Calu3 (cell line): ENCODE measurements at regions of chr1 and their contacts with region 1.

Region 1: DNA sequence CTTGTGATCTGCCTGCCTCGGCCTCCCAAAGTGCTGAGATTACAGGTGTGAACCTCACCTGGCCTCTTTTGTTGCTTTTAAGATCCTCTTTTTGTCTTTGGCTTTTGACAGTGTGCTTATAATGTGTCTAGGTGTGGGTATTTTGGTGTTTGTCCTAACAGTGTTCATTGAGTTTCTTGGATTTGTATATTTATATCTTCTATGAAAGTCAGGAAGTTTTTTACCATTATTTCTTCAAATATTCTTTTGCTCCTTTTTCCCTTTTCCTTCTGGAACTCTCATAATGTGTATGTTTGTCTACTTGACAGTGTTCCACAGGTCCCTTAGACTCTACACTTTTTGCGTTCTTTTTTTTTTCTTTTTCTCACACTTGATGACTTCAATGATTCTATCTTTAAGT is 59.1 kb downstream of the URB2 start:
- DNase-seq: no peak
- H3K4me3 Mint-ChIP-seq: no peak overlapping the region
- H3K27ac Mint-ChIP-seq: no peak overlapping the region
- H3K4me1 Mint-ChIP-seq: no peaks in the 10 kb centered on the region
- H3K27me3 Mint-ChIP-seq: no peaks in the 10 kb centered on the region
- CTCF ChIP-seq: no peak

Region 2: DNA sequence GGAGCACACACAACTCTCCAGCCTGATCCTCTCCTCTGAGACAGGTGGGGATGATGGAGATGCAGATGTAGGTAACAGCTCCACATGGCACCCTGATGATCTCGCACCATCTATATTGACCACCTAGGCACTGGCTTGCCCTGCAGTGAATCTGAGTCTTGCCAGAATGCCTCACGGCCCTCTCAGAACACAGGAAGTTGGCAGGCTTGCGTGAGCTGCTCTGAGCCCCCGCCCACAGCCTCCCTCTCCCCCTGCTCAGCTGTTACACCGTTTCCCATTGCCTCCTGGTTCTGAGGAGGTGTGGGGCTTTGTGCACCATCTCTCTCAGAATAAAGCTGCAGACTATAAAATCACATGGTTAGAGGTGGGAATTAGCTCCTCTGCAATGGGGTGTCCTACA is 11.1 kb before region 1 on chr1:
- CTCF ChIA-PET with region 1: interaction called, 4 read pairs
- intact Hi-C with region 1: loop called (anchors 1 kb)
- DNase-seq: no peak
- H3K4me3 Mint-ChIP-seq: no peak overlapping the region
- H3K27ac Mint-ChIP-seq: no peak overlapping the region
- H3K4me1 Mint-ChIP-seq: no peaks in the 10 kb centered on the region
- H3K27me3 Mint-ChIP-seq: no peaks in the 10 kb centered on the region
- CTCF ChIP-seq: no peak